Gastrocnemius medialis (tissue), 4 donors: ENCODE measurements at regions of chr11 and their contacts with region 1.

Region 1: GRCh38 chr11:114774599-114775361 is 96.5 kb downstream of the NXPE2 start:
- DNase-seq: peak in 1 of 2 donors; percentile 47
- ATAC-seq: peak; percentile 68 to 77
- H3K4me3 ChIP-seq: no peak overlapping the region
- H3K27ac ChIP-seq: no peak overlapping the region
- H3K4me1 ChIP-seq: peaks cover 0 to 4% of the 10 kb centered on the region in 2 donors
- H3K27me3 ChIP-seq: no peaks in the 10 kb centered on the region
- CTCF ChIP-seq: peak; percentile 58 to 72 (median 70)
- POLR2A ChIP-seq: no peak

Region 2: GRCh38 chr11:114017723-114018122 is 757.1 kb before region 1 on chr11:
- in situ Hi-C with region 1: loop called in 1 of 4 experiments (anchors 25 kb)
- intact Hi-C with region 1: no loop called
- DNase-seq: no peak
- ATAC-seq: peak; percentile 21 to 49
- H3K4me3 ChIP-seq: no peak overlapping the region
- H3K27ac ChIP-seq: no peak overlapping the region
- H3K4me1 ChIP-seq: peaks cover 0 to 4% of the 10 kb centered on the region in 2 donors
- H3K27me3 ChIP-seq: no peaks in the 10 kb centered on the region
- CTCF ChIP-seq: no peak
- POLR2A ChIP-seq: no peak

Region 3: GRCh38 chr11:114340311-114341131 is 434.3 kb before region 1 on chr11:
- in situ Hi-C with region 1: loop called in 3 of 4 experiments (anchors 10 to 25 kb)
- intact Hi-C with region 1: no loop called
- DNase-seq: peak in 1 of 2 donors; percentile 47
- ATAC-seq: peak; percentile 70 to 88
- H3K4me3 ChIP-seq: peak overlapping the region in 3 of 4 donors; percentile 18 to 37 (median 34)
- H3K27ac ChIP-seq: peak overlapping the region in 3 of 4 donors; percentile 2 to 29 (median 14)
- H3K4me1 ChIP-seq: peaks cover 7 to 8% of the 10 kb centered on the region in 2 donors
- H3K27me3 ChIP-seq: no peaks in the 10 kb centered on the region
- CTCF ChIP-seq: peak; percentile 61 to 82 (median 79)
- POLR2A ChIP-seq: no peak

Region 4: DNA sequence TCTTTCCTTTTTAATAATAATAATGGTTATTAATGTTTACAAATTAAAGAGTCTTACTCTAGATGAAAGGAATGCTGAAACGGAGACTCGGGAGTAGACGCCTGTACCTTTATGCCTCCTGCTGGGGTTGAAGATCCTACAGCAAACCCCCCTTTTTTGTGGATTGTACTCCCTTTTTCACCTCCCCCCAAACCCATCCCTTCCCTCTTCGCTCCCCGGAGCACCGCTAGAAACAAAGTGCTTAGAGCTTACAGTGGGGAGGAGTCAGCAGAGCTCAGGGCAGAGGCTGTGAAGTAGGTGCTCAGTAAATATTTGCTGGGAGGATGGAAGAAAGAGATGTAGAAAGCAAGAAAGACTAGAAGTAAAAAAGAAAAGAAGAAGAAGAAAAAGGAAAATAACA is 73.2 kb after region 1 on chr11:
- in situ Hi-C with region 1: no loop called
- intact Hi-C with region 1: no loop called
- DNase-seq: no peak
- ATAC-seq: no peak
- H3K4me3 ChIP-seq: no peak overlapping the region
- H3K27ac ChIP-seq: no peak overlapping the region
- H3K4me1 ChIP-seq: peaks cover 6 to 19% of the 10 kb centered on the region in 2 donors
- H3K27me3 ChIP-seq: no peaks in the 10 kb centered on the region
- CTCF ChIP-seq: no peak
- POLR2A ChIP-seq: no peak

Region 5: GRCh38 chr11:114953039-114953438 is 178.3 kb after region 1 on chr11:
- in situ Hi-C with region 1: loop called in 1 of 4 experiments (anchors 10 kb)
- intact Hi-C with region 1: loop called (anchors 10 kb)
- DNase-seq: no peak
- ATAC-seq: no peak
- H3K4me3 ChIP-seq: no peak overlapping the region
- H3K27ac ChIP-seq: no peak overlapping the region
- H3K4me1 ChIP-seq: no peaks in the 10 kb centered on the region
- H3K27me3 ChIP-seq: no peaks in the 10 kb centered on the region
- CTCF ChIP-seq: peak in 1 of 5 experiments; percentile 10
- POLR2A ChIP-seq: no peak

Region 6: DNA sequence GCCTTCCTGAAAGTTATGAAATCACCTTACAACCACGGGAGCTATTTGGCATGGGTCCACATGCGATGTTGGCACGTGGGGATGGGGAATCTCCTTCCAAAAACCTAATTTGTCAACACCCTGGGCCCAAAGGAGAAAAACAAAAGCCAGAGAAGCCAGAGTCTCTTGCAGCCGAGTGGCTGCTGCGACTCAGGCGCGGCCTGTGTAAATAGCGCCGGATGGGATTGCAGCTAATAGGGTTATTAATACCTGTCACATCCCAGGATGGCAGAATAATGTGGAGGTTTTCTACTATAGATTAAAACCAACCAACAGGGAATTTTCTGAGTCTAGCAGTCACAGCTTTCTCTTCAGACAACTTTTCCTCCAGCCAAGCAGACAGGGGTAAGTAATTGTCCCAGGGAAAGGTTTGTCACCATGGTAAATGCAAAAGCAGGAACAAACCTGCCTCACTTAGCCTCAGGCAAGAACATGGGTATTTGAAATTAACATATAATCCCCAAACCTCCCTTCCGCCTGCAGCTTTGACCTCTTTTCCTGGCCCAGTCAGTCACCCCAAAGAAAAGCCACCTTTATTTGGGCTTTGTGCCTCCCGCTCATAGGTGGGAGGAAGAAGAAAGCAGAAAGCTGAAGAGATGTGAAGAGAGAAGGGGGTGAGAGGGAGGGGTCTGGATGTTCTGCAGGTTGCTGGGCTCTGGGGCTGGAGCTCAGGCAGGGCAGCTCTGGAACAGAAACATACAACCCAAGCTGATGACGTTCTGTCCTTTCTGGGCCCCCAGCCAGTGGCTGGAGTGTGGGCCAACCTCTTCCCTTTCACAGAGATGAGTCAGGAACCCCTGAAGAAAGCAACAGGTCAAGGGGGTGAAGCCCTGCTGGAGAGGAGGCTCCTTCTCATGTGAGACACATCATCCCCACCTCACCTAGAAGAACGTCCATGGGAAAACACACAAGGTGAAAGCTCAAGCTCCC is 280.1 kb after region 1 on chr11:
- in situ Hi-C with region 1: no loop called
- intact Hi-C with region 1: no loop called
- DNase-seq: peak in 1 of 2 donors; percentile 26
- ATAC-seq: peak; percentile 26 to 55
- H3K4me3 ChIP-seq: no peak overlapping the region
- H3K27ac ChIP-seq: no peak overlapping the region
- H3K4me1 ChIP-seq: no peaks in the 10 kb centered on the region
- H3K27me3 ChIP-seq: no peaks in the 10 kb centered on the region
- CTCF ChIP-seq: no peak
- POLR2A ChIP-seq: no peak

Region 7: DNA sequence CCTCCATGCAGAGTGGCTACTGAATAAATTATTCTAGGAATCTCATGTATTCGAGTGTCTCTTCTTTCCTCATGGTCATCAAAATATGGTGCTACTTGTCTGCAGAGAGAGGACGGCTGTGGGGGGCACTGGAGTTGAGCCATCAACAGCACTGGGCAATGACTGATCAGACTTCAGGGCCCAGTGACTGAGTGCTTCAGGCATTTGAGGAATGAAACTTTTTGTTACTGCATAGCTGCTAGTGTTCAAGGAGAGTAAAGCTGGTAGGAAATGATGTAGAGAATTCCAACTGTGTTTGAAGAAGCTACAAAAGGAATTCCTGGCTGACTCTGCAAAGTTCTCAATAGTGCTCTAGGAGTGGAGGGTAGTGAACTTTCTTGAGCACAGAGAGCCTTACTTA is 451.8 kb after region 1 on chr11:
- in situ Hi-C with region 1: no loop called
- intact Hi-C with region 1: no loop called
- DNase-seq: no peak
- ATAC-seq: no peak
- H3K4me3 ChIP-seq: no peak overlapping the region
- H3K27ac ChIP-seq: no peak overlapping the region
- H3K4me1 ChIP-seq: peaks cover 3 to 10% of the 10 kb centered on the region in 2 donors
- H3K27me3 ChIP-seq: no peaks in the 10 kb centered on the region
- CTCF ChIP-seq: no peak
- POLR2A ChIP-seq: no peak